Uterus (tissue), 4 donors: ENCODE measurements at regions of chr7 and their contacts with region 1.

Region 1: GRCh38 chr7:149856-150636 is 42.3 kb upstream of the FAM20C start:
- DNase-seq: peak in 1 of 2 donors; percentile 48
- H3K4me3 ChIP-seq: peak overlapping the region; percentile 36 to 67
- H3K27ac ChIP-seq: peak overlapping the region; percentile 86 to 94
- H3K4me1 ChIP-seq: no peaks in the 10 kb centered on the region
- H3K27me3 ChIP-seq: no peaks in the 10 kb centered on the region
- CTCF ChIP-seq: no peak
- POLR2A ChIP-seq: no peak

Region 2: GRCh38 chr7:191981-192649 is 42.1 kb after region 1 on chr7 and contains the start of gene FAM20C:
- intact Hi-C with region 1: loop called (anchors 5 kb)
- DNase-seq: peak; percentile 77 to 84
- H3K4me3 ChIP-seq: peak within 1 kb of the TSS; percentile 47 to 81
- H3K27ac ChIP-seq: peak within 1 kb of the TSS; percentile 65 to 95
- H3K4me1 ChIP-seq: peaks cover 0 to 17% of the 10 kb centered on the region in 2 donors
- H3K27me3 ChIP-seq: no peaks in the 10 kb centered on the region
- CTCF ChIP-seq: no peak
- POLR2A ChIP-seq: peak; percentile 79 to 87
- total RNA-seq, gene FAM20C: 3.8 to 28.8 (median 16.4) TPM